Left ventricle myocardium superior (tissue), 1 donor: ENCODE measurements at regions of chr11 and their contacts with region 1.

Region 1: DNA sequence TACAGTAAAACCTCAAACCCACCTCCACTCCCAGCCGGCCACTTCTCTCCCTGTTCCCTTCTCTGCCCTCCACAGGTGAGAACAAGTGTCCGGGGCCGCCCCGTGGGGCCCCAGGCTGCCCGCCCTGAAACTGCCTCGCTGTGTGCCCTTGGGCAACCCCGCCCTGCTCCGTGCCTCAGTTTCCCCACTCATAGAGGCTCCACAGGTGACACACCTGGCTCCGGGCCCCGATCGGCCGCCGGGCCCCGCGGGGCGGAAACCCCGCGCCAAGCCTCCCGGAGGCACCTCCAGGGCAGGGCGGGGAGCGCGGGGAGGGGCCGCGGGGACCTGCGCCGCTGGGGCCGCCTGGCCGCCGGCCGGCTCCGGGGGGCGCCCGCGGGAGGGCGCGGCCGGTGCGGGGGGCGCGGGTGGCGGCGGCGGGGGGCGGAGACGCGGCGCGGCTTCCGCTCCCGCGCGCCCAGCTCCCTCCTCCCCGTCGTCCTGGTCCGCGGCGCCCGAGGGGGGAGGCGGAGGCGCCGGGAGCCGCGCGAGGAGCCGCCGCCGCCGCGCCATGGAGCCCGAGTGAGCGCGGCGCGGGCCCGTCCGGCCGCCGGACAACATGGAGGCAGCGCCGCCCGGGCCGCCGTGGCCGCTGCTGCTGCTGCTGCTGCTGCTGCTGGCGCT is at the start of gene LRP5:
- DNase-seq: peak; percentile 69
- ATAC-seq: peak; percentile 10
- total RNA-seq, gene LRP5: 64.8 TPM

Region 2: GRCh38 chr11:68383976-68384501 is 71.8 kb after region 1 on chr11:
- intact Hi-C with region 1: loop called (anchors 5 kb)
- DNase-seq: peak; percentile 82
- ATAC-seq: peak; percentile 29